ENCODE measurements at regions of chr5 and their contacts with region 1.

Region 1: GRCh38 chr5:124583469-124584350 is 162.7 kb downstream of the ZNF608 start:
- DNase-seq: peak; percentile 14
- H3K4me3 ChIP-seq: no peak overlapping the region
- H3K27ac ChIP-seq: no peak overlapping the region
- H3K4me1 ChIP-seq: peaks cover 0 to 8% (median 0%) of the 10 kb centered on the region in 4 donors
- H3K27me3 ChIP-seq: no peaks in the 10 kb centered on the region
- CTCF ChIP-seq: no peak
- EP300 ChIP-seq: no peak
- POLR2A ChIP-seq: no peak

Region 2: GRCh38 chr5:123520677-123521247 is 1062.9 kb before region 1 on chr5:
- in situ Hi-C with region 1: no loop called
- intact Hi-C with region 1: no loop called
- DNase-seq: no peak
- H3K4me3 ChIP-seq: no peak overlapping the region
- H3K27ac ChIP-seq: no peak overlapping the region
- H3K4me1 ChIP-seq: peaks cover 0 to 66% (median 31%) of the 10 kb centered on the region in 4 donors
- H3K27me3 ChIP-seq: no peaks in the 10 kb centered on the region
- CTCF ChIP-seq: no peak
- EP300 ChIP-seq: no peak
- POLR2A ChIP-seq: no peak

Region 3: GRCh38 chr5:124111885-124112284 is 471.8 kb before region 1 on chr5:
- in situ Hi-C with region 1: no loop called
- intact Hi-C with region 1: no loop called
- DNase-seq: no peak
- H3K4me3 ChIP-seq: no peak overlapping the region
- H3K27ac ChIP-seq: no peak overlapping the region
- H3K4me1 ChIP-seq: no peaks in the 10 kb centered on the region
- H3K27me3 ChIP-seq: no peaks in the 10 kb centered on the region
- CTCF ChIP-seq: no peak
- EP300 ChIP-seq: no peak
- POLR2A ChIP-seq: no peak

Region 4: GRCh38 chr5:124410539-124411488 is 172.9 kb before region 1 on chr5:
- in situ Hi-C with region 1: no loop called
- intact Hi-C with region 1: no loop called
- DNase-seq: no peak
- H3K4me3 ChIP-seq: no peak overlapping the region
- H3K27ac ChIP-seq: no peak overlapping the region
- H3K4me1 ChIP-seq: no peaks in the 10 kb centered on the region
- H3K27me3 ChIP-seq: no peaks in the 10 kb centered on the region
- CTCF ChIP-seq: no peak
- EP300 ChIP-seq: no peak
- POLR2A ChIP-seq: no peak

Region 5: DNA sequence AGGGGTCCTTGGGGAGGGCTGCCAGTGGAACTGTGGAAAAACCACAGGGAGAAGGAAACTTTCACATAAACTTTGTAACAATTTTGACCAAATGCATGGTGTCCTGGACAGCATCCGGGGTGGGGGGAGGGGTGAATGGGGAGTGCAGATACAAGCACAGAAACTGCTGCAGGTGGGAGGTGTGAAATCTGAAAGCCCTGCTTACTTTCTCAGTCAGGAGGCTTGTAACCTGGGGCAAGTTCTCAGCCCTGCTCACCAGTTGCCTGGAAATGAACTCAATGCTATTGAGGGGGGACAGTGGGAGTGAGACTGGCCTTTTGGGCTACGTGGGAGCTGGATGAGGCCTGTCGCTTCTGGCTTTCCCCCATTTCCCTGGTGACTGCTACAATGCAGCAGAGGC is 857.2 kb after region 1 on chr5:
- in situ Hi-C with region 1: no loop called
- intact Hi-C with region 1: loop called (anchors 5 kb)
- DNase-seq: no peak
- H3K4me3 ChIP-seq: no peak overlapping the region
- H3K27ac ChIP-seq: no peak overlapping the region
- H3K4me1 ChIP-seq: no peaks in the 10 kb centered on the region
- H3K27me3 ChIP-seq: no peaks in the 10 kb centered on the region
- CTCF ChIP-seq: no peak
- EP300 ChIP-seq: no peak
- POLR2A ChIP-seq: no peak

Region 6: DNA sequence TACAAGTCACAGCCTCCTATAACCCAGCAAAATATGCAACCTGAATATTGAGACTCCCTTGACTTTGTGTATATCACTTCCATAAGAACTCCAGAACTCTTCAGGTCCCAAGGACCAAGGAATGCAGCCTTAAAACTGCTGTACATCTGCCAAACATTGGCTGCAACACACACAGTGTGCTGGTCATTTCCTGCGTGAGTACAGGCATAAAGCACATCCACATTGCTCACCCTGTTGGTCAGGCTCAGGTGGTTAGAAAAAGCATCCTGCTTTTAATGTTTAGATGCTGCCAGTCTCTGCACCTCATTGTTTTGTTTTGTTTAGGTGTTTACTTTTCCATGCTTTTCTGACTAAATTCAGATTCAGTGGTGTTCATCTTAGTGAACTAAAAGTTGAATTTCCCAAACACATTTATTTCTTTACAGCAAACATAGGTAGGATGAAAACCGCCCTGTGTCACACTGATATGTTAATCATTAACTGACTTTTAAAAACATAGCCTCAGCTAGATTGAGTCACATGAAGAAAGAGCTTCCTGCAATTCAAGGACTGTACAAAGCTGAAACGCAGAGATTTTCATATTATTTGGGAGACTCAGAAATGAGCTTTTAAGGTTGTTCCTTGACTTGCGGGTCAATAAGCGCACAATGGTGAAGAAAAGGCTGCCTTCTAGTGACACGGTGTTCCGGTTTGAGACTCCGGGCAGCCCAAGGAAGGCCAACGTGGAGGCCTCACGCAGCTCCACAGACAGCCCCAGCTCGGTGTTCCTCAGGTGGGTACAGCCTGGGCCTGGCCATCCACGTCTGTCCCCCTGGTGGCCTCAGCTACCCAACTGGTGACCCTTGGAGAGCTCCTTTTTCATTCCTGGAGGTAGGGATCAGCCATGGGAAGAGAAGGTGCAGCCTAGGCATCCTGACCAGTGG is 1787.3 kb after region 1 on chr5:
- in situ Hi-C with region 1: no loop called
- intact Hi-C with region 1: no loop called
- DNase-seq: peak; percentile 58
- H3K4me3 ChIP-seq: peak overlapping the region; percentile 12 to 55 (median 36)
- H3K27ac ChIP-seq: peak overlapping the region; percentile 81 to 92 (median 84)
- H3K4me1 ChIP-seq: peaks cover 13 to 36% (median 26%) of the 10 kb centered on the region in 4 donors
- H3K27me3 ChIP-seq: no peaks in the 10 kb centered on the region
- CTCF ChIP-seq: peak in 4 of 5 experiments; percentile 14 to 61 (median 38)
- EP300 ChIP-seq: no peak
- POLR2A ChIP-seq: peak; percentile 62

Measured in transverse colon (tissue), 4 donors.